Activated B cell treated with CpG ODN at 0.5 μM for 24 hours (primary cell): ENCODE measurements at regions of chr10 and their contacts with region 1.

Region 1: GRCh38 chr10:127853868-127854768 is 38.6 kb downstream of the CLRN3 start:
- DNase-seq: peak; percentile 46
- ATAC-seq: peak; percentile 76
- H3K4me3 Mint-ChIP-seq: peak overlapping the region; percentile 60
- H3K27ac Mint-ChIP-seq: peak overlapping the region; percentile 74
- H3K4me1 Mint-ChIP-seq: peaks cover 31% of the 10 kb centered on the region
- H3K27me3 Mint-ChIP-seq: no peaks in the 10 kb centered on the region
- CTCF ChIP-seq: peak; percentile 59

Region 2: GRCh38 chr10:125982260-125982948 is 1871.7 kb before region 1 on chr10:
- CTCF ChIA-PET with region 1: interaction called, 5 read pairs
- POLR2A ChIA-PET with region 1: no interaction called
- intact Hi-C with region 1: loop called (anchors 5 kb)
- DNase-seq: peak; percentile 31
- ATAC-seq: peak; percentile 85
- H3K4me3 Mint-ChIP-seq: no peak overlapping the region
- H3K27ac Mint-ChIP-seq: peak overlapping the region; percentile 64
- H3K4me1 Mint-ChIP-seq: peaks cover 37% of the 10 kb centered on the region
- H3K27me3 Mint-ChIP-seq: peaks cover 5% of the 10 kb centered on the region
- CTCF ChIP-seq: no peak

Region 3: DNA sequence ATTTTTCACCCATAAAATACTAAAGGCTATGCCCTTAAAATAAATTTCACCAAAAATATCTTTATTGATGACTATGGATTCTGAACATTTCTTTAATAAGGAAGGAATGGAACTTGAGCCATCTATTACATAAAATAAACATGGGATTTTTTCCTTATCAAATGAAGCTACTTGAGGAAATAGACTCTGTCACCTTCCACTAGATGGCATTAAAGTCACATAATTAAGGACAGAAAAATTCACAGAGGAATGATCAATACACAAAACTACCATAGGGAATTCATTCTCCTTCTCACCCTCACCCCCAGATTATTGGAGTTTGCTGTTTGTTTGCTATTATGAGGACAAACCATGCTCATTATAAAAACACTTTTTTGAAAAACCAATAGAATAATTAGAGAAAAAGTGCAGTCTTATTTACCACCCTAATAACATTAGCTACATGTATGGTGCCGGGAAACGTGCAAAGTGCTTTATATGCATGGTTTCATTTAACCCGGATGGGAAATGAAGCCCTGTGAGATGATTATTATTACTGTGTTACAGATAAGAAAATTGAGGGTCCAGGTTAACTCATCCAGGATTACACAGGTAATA is 138.2 kb before region 1 on chr10:
- CTCF ChIA-PET with region 1: interaction called, 25 read pairs
- POLR2A ChIA-PET with region 1: no interaction called
- intact Hi-C with region 1: loop called (anchors 1 kb)
- DNase-seq: no peak
- ATAC-seq: no peak
- H3K4me3 Mint-ChIP-seq: no peak overlapping the region
- H3K27ac Mint-ChIP-seq: no peak overlapping the region
- H3K4me1 Mint-ChIP-seq: no peaks in the 10 kb centered on the region
- H3K27me3 Mint-ChIP-seq: no peaks in the 10 kb centered on the region
- CTCF ChIP-seq: no peak

Region 4: GRCh38 chr10:127899766-127900387 is 45.8 kb after region 1 on chr10:
- CTCF ChIA-PET with region 1: no interaction called
- POLR2A ChIA-PET with region 1: no interaction called
- intact Hi-C with region 1: loop called (anchors 5 kb)
- DNase-seq: no peak
- ATAC-seq: no peak
- H3K4me3 Mint-ChIP-seq: no peak overlapping the region
- H3K27ac Mint-ChIP-seq: no peak overlapping the region
- H3K4me1 Mint-ChIP-seq: no peaks in the 10 kb centered on the region
- H3K27me3 Mint-ChIP-seq: peaks cover 21% of the 10 kb centered on the region
- CTCF ChIP-seq: no peak

Region 5: GRCh38 chr10:127911218-127911866 is 57.2 kb after region 1 on chr10:
- CTCF ChIA-PET with region 1: no interaction called
- POLR2A ChIA-PET with region 1: no interaction called
- intact Hi-C with region 1: no loop called
- DNase-seq: no peak
- ATAC-seq: no peak
- H3K4me3 Mint-ChIP-seq: no peak overlapping the region
- H3K27ac Mint-ChIP-seq: no peak overlapping the region
- H3K4me1 Mint-ChIP-seq: no peaks in the 10 kb centered on the region
- H3K27me3 Mint-ChIP-seq: peaks cover 30% of the 10 kb centered on the region
- CTCF ChIP-seq: no peak

Region 6: DNA sequence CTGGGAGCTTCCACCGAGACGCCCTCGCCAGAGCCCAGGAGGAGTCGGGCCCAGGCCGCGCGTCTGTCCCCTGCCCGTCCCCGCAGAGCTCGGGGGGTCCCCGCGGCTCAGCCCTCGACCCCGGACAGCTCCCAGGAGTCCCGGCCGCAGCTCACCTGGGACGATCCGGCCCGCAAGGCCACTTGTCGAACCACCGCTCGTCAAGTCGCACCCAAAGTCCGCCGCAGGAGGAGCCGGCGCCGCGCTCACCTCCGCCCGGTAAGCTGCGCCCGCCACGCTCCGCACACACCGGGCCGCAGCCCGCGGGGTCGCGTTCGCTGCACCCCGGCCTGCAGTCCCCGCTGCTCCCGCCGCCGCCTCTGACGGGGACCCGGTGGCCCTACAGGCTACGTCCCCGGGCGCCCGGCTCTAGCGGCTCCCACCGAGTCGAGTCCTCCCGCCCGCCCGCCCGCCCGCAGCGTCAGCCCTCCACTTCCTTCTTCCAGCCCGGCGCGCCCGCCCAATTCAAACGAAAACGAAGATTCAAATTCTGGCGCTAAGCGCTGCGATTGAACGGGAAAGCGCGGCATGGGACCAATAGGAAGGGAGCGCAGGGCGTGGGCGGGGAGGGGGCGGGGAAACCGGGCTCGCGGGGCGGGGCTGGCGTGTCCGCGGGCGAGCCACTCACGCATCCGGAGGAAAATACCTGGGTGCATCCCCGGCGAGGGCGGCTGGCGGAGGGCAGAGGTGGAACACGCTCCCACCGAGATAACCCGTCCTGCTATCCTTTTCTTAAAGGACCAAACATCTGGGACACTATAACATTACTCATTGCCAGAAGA is 272.0 kb after region 1 on chr10 and contains the start of gene MKI67:
- CTCF ChIA-PET with region 1: no interaction called
- POLR2A ChIA-PET with region 1: interaction called, 3 read pairs
- intact Hi-C with region 1: loop called (anchors 5 kb)
- DNase-seq: peak; percentile 68
- ATAC-seq: peak; percentile 94
- H3K4me3 Mint-ChIP-seq: peak within 1 kb of the TSS; percentile 86
- H3K27ac Mint-ChIP-seq: peak within 1 kb of the TSS; percentile 87
- H3K4me1 Mint-ChIP-seq: peaks cover 18% of the 10 kb centered on the region
- H3K27me3 Mint-ChIP-seq: peaks cover 22% of the 10 kb centered on the region
- CTCF ChIP-seq: no peak
- total RNA-seq, gene MKI67: 2.2 and 3.5 TPM in 2 replicates

Region 7: GRCh38 chr10:128211953-128212727 is 358.0 kb after region 1 on chr10:
- CTCF ChIA-PET with region 1: interaction called, 3 read pairs
- POLR2A ChIA-PET with region 1: no interaction called
- intact Hi-C with region 1: loop called (anchors 5 kb)
- DNase-seq: peak; percentile 82
- ATAC-seq: peak; percentile 90
- H3K4me3 Mint-ChIP-seq: peak overlapping the region; percentile 80
- H3K27ac Mint-ChIP-seq: peak overlapping the region; percentile 56
- H3K4me1 Mint-ChIP-seq: peaks cover 11% of the 10 kb centered on the region
- H3K27me3 Mint-ChIP-seq: peaks cover 9% of the 10 kb centered on the region
- CTCF ChIP-seq: peak; percentile 74